ENCODE measurements at regions of chr22 and their contacts with region 1.

Region 1: GRCh38 chr22:28800308-28801077 is at the start of gene XBP1:
- DNase-seq: peak; percentile 78 to 95 (median 87)
- ATAC-seq: peak; percentile 87
- H3K4me3 ChIP-seq: peak within 1 kb of the TSS; percentile 79 to 99
- H3K4me3 Mint-ChIP-seq: peak within 1 kb of the TSS; percentile 84
- H3K27ac ChIP-seq: peak within 1 kb of the TSS; percentile 85 to 97
- H3K27ac Mint-ChIP-seq: peak within 1 kb of the TSS; percentile 98
- H3K4me1 ChIP-seq: peaks cover 42% of the 10 kb centered on the region
- H3K4me1 Mint-ChIP-seq: peaks cover 49% of the 10 kb centered on the region
- H3K27me3 ChIP-seq: no peaks in the 10 kb centered on the region
- H3K27me3 Mint-ChIP-seq: no peaks in the 10 kb centered on the region
- CTCF ChIP-seq: no peak
- total RNA-seq, gene XBP1: 207 to 212 TPM

Region 2: DNA sequence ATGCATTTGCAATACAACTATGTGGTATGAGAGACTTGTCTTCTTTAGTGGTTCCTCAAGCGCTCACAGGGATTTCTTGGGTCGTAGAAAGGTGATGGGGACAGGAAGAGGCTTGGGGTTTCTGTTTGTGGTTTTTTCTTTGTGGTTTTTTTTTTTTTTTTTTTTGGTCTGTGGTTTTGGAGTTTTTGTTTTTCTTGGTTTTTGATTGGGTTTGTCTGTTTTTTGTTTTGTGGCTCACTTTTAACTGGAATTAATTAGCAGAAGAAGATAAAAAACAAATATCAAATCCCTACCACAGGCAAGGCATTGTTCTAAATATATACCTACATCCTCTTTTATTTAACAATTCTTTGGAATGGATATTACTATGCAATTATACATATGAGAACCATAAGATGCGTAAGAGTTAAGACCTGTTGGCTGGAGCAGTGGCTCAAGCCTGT is 126.4 kb before region 1 on chr22:
- CTCF ChIA-PET with region 1: no interaction called
- POLR2A ChIA-PET with region 1: interaction called, 3 read pairs
- intact Hi-C with region 1: loop called in 1 of 2 experiments (anchors 10 kb)
- DNase-seq: peak in 5 of 9 experiments; percentile 18 to 87 (median 66)
- ATAC-seq: peak; percentile 95
- H3K4me3 ChIP-seq: no peak overlapping the region
- H3K4me3 Mint-ChIP-seq: peak overlapping the region; percentile 65
- H3K27ac ChIP-seq: no peak overlapping the region
- H3K27ac Mint-ChIP-seq: peak overlapping the region; percentile 93
- H3K4me1 ChIP-seq: peaks cover 23% of the 10 kb centered on the region
- H3K4me1 Mint-ChIP-seq: peaks cover 24% of the 10 kb centered on the region
- H3K27me3 ChIP-seq: peaks cover 26 to 48% of the 10 kb centered on the region in 2 experiments
- H3K27me3 Mint-ChIP-seq: peaks cover 59% of the 10 kb centered on the region
- CTCF ChIP-seq: no peak

Region 3: GRCh38 chr22:28772633-28773460 is 27.6 kb before region 1 on chr22 and contains the start of gene CCDC117:
- CTCF ChIA-PET with region 1: interaction called, 4 read pairs
- POLR2A ChIA-PET with region 1: interaction called, 34 read pairs
- intact Hi-C with region 1: loop called (anchors 1 kb)
- DNase-seq: peak; percentile 85 to 96 (median 94)
- ATAC-seq: peak; percentile 94
- H3K4me3 ChIP-seq: peak within 1 kb of the TSS; percentile 60 to 65
- H3K4me3 Mint-ChIP-seq: peak within 1 kb of the TSS; percentile 94
- H3K27ac ChIP-seq: peak within 1 kb of the TSS; percentile 68 to 77
- H3K27ac Mint-ChIP-seq: peak within 1 kb of the TSS; percentile 94
- H3K4me1 ChIP-seq: peaks cover 26% of the 10 kb centered on the region
- H3K4me1 Mint-ChIP-seq: peaks cover 30% of the 10 kb centered on the region
- H3K27me3 ChIP-seq: no peaks in the 10 kb centered on the region
- H3K27me3 Mint-ChIP-seq: no peaks in the 10 kb centered on the region
- CTCF ChIP-seq: peak; percentile 31
- total RNA-seq, gene CCDC117: 13.7 to 15.4 TPM

Region 4: DNA sequence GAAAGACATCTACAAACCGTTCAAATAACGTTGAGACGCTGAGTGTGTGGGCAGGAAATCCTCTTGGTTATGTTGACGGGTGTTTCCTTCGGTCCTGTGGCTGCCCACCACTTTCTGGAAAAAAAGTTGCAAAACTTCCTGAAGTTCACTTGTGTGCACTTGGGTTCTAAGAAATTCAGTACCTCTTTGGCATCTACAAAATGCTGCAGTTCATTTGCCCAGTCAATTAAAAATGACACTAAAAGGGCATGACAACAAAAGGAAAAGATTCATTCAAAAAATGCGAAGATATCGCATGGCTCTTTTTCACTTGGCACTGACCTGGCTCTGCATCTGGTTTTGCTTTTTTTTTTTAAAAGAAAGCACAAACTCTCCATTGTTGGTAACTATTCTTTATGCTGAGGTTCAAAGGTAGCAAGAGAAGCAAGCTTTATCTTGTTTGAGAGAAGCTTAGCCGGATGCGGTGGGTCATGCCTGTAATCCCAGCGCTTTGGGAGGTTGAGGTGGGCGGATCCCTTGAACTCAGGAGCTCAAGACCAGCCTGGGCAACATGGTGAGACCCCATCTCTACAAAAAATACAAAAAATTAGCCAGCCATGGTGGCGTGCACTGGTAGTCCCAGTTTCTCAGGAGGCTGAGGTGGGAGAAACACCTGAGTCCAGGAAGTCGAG is 10.5 kb after region 1 on chr22:
- CTCF ChIA-PET with region 1: interaction called, 8 read pairs
- POLR2A ChIA-PET with region 1: interaction called, 106 read pairs
- intact Hi-C with region 1: loop called (anchors 1 kb)
- DNase-seq: peak in 6 of 9 experiments; percentile 31 to 80 (median 52)
- ATAC-seq: peak; percentile 51
- H3K4me3 ChIP-seq: peak overlapping the region; percentile 25 to 46
- H3K4me3 Mint-ChIP-seq: peak overlapping the region; percentile 82
- H3K27ac ChIP-seq: peak overlapping the region; percentile 14 to 64
- H3K27ac Mint-ChIP-seq: peak overlapping the region; percentile 92
- H3K4me1 ChIP-seq: peaks cover 72% of the 10 kb centered on the region
- H3K4me1 Mint-ChIP-seq: peaks cover 76% of the 10 kb centered on the region
- H3K27me3 ChIP-seq: no peaks in the 10 kb centered on the region
- H3K27me3 Mint-ChIP-seq: no peaks in the 10 kb centered on the region
- CTCF ChIP-seq: no peak

Region 5: DNA sequence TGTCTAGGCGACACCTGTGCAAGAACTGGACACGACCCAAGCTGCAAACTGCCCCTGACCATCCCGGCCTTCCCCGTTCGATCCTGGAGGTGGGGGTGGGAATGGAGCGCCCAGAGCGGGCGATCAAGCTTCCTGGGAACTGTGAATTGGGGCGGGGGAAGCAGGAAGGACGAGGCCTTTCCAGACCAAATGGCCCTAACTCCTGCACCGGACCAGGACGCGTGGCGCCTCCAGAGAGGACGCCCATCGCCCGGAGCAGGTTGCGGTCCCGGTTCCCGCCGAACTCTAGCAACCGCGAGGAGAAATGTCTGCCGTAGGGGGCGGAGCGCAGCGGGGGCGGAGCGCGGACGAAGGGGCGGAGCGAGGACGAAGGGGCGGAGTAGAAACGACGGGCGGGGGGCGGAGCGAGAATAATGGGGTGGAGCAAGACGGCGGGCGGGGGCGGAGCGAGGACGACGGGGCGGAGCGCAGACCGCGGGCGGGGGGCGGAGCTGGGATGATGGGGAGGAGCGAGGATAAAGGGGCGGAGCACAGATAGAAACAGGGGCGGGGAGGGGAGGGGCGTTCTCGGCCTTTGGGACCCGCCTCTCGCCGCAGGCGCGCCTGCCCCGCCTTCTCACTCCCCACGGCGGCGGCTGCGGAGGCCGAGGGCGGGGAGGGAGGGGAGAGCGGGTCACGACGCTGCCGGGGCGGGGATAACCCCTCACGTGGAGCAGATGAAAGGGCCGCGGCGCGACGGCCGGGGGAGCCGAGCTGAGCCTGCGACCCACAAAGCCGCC is 82.6 kb after region 1 on chr22 and contains the start of gene ZNRF3:
- CTCF ChIA-PET with region 1: no interaction called
- POLR2A ChIA-PET with region 1: interaction called, 4 read pairs
- intact Hi-C with region 1: loop called (anchors 2 to 5 kb)
- DNase-seq: peak; percentile 79 to 95 (median 92)
- ATAC-seq: peak; percentile 94
- H3K4me3 ChIP-seq: peak within 1 kb of the TSS; percentile 52 to 77
- H3K4me3 Mint-ChIP-seq: peak within 1 kb of the TSS; percentile 87
- H3K27ac ChIP-seq: no peak within 1 kb of the TSS
- H3K27ac Mint-ChIP-seq: no peak within 1 kb of the TSS
- H3K4me1 ChIP-seq: peaks cover 13% of the 10 kb centered on the region
- H3K4me1 Mint-ChIP-seq: peaks cover 23% of the 10 kb centered on the region
- H3K27me3 ChIP-seq: peaks cover 5 to 9% of the 10 kb centered on the region in 2 experiments
- H3K27me3 Mint-ChIP-seq: peaks cover 27% of the 10 kb centered on the region
- CTCF ChIP-seq: no peak
- total RNA-seq, gene ZNRF3: 0.49 to 0.69 TPM